ENCODE measurements at regions of chr1 and their contacts with region 1.

Region 1: GRCh38 chr1:119870917-119871596 is 25.3 kb downstream of the ADAM30 start:
- DNase-seq: peak; percentile 97
- ATAC-seq: peak; percentile 98
- H3K4me3 Mint-ChIP-seq: no peak overlapping the region
- H3K27ac Mint-ChIP-seq: no peak overlapping the region
- H3K4me1 Mint-ChIP-seq: peaks cover 4% of the 10 kb centered on the region
- H3K27me3 Mint-ChIP-seq: peaks cover 6% of the 10 kb centered on the region
- CTCF ChIP-seq: peak; percentile 93

Region 2: DNA sequence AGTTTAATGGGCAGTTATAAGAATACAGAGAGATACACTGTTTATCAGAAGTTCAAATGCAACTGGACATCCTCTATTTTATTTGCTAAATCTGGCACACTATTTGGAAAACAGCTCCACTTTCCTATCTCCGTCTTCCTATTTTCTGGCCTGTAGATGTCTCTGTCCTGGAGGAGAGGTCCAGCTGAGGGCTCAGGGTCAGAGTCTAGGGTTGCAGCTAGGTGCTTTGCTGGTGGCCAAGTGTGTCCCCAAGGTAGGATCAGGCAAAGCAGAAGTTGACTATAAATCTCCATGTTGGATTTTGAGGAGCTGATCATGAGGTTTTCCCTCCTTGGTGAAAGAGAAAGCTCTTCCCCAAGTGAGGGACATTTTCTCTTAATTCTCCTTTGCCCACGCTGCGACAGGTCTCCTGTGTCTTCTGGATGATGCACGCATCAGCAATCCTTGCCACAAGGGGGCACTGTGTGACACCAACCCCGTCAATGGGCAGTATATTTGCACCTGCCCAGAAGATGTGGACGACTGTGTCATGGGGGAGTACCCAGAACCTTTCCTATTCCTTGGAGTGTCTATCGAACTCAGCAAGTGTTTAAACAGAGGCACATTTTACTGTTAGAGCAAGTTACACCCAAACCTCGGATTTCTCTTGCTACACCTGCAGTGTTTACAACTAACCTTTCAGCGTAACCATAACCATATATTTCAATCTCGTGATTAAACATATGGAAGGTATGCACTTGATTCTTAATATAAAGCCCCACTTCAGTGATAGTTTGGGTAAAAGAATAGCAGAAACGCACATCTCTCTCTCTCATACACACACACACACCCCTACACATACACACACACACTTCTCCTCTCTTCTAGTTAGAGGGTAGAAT is 15.1 kb after region 1 on chr1:
- CTCF ChIA-PET with region 1: interaction called, 13 read pairs
- POLR2A ChIA-PET with region 1: no interaction called
- DNase-seq: peak; percentile 81
- ATAC-seq: peak; percentile 92
- H3K4me3 Mint-ChIP-seq: no peak overlapping the region
- H3K27ac Mint-ChIP-seq: no peak overlapping the region
- H3K4me1 Mint-ChIP-seq: no peaks in the 10 kb centered on the region
- H3K27me3 Mint-ChIP-seq: no peaks in the 10 kb centered on the region
- CTCF ChIP-seq: peak; percentile 85